Posterior vena cava (tissue), 2 donors: ENCODE measurements at regions of chr6 and their contacts with region 1.

Region 1: DNA sequence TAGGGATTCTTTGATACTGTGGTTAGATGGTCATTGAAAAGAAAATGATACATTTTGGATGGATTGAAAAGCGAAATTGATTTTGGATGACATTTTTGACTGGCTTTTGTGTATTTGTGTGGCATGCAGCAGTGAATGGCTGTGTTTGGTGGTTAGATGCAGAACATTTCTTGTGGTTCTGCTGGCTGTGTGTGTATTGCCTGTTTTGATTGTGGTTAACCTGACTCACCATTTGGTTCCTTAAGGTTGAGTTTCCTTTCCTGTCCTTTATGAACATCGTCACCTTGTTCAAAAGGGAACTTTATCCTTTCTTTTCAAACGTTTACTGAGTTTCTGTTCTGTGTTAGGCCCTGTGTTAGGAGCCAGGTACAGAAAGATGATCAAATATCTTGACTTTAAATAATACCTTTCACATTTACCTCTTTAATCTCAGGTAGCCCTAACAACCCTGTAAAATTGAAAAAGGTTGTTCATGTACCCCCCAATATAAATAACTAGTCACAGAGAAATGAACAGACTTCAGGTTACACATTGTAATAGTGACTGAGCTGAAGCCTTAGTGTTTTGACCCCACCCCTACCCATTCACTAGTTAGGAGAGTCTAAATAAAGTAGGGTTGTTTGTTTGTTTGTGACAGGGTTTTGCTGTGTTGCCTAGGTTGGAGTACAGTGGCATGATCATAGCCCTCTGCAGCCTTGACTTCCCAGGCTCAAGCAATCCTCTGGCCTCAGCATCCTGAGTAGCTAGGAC is 23.8 kb downstream of the ANKS1A start:
- DNase-seq: no peak

Region 2: DNA sequence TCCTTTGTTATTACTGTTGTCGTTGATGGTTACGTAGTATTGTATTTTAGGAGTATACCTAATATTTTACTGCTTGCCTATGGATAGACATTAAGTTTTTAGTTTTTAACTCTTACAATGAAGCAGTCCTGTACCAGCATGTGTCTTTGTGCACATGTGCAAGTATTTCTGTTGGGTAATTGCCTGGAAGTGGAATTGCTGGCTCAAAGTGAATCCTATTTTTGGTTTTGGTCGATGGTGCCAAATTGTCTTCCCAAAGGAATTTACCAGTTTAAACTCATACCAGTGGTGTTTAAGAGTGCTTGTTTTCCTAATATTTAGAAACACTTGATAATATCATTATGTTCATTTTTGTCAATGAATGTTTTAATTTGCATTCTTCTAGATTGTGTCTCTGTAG is 51.7 kb after region 1 on chr6:
- intact Hi-C with region 1: loop called in 1 of 2 experiments (anchors 10 kb)
- DNase-seq: no peak